ENCODE measurements at regions of chr19 and their contacts with region 1.

Region 1: DNA sequence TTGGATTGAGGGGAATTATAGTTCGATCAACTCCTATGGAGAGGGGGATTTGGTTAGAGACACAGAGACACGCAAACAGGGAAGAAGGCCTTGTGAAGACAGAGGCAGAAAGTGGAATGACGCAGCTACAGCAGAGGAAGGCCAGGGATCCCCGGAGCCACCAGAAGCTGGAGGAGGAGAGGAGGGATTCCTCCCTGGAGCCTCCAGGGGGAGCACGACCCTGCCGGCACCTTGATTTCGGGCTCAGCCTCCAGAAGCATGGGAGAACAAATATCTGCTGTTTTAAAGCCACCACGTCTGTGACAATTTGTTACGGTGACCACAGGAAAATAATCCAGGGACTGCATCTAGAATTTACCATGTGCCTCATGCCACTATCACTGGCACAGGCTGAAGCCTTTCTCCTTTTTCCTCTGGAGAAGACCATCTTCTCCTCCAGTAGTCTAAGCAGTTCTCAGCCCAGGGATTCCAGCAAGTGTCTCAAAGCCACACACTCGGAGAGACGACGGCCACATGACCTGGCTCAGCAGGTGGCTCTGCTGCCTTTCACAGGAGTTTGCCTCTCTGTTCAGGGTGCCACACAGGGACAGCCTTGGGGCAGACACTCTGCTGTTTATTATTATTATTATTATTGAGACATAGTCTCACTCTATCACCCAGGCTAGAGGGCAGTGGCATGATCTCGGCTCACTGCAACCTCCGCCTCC is 39.9 kb upstream of the CCNE1 start:
- DNase-seq: peak; percentile 63
- H3K27ac ChIP-seq: no peak overlapping the region
- CTCF ChIP-seq: peak; percentile 68

Region 2: GRCh38 chr19:29546583-29547190 is 225.2 kb before region 1 on chr19:
- CTCF ChIA-PET with region 1: no interaction called
- POLR2A ChIA-PET with region 1: no interaction called
- DNase-seq: no peak
- H3K27ac ChIP-seq: no peak overlapping the region
- CTCF ChIP-seq: no peak

Region 3: GRCh38 chr19:29761575-29762232 is 10.2 kb before region 1 on chr19:
- CTCF ChIA-PET with region 1: interaction called, 11 read pairs
- POLR2A ChIA-PET with region 1: no interaction called
- DNase-seq: no peak
- H3K27ac ChIP-seq: no peak overlapping the region
- CTCF ChIP-seq: no peak

Region 4: DNA sequence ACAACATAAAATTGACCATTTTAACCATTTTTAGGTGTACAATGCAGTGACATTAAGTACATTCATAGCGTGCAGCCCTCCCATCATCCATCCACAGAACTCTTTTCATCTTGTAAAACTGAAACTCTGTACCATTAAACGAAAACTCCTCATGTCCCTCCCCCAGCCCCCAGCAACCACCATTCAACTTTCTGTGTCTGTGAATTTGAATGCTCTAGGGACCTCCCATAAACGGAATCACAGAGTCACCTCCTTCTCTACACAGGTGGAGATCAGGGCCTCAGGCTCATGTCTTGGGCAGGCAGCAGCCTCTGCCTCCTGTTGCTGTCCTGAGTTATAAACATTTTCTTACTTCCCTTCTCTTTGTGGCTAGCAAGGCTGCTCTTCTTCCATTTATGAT is 32.6 kb after region 1 on chr19:
- CTCF ChIA-PET with region 1: no interaction called
- POLR2A ChIA-PET with region 1: no interaction called
- DNase-seq: no peak
- H3K27ac ChIP-seq: no peak overlapping the region
- CTCF ChIP-seq: no peak

Region 5: GRCh38 chr19:29837448-29837981 is 65.7 kb after region 1 on chr19:
- CTCF ChIA-PET with region 1: no interaction called
- POLR2A ChIA-PET with region 1: no interaction called
- DNase-seq: no peak
- H3K27ac ChIP-seq: no peak overlapping the region
- CTCF ChIP-seq: no peak

Measured in RWPE1 (cell line).